Right ventricle myocardium superior (tissue), 1 donor: ENCODE measurements at regions of chr6 and their contacts with region 1.

Region 1: GRCh38 chr6:45916692-45917091 is 99.0 kb downstream of the CLIC5 start:
- DNase-seq: no peak
- ATAC-seq: peak; percentile 69

Region 2: GRCh38 chr6:44475779-44476434 is 1440.8 kb before region 1 on chr6:
- intact Hi-C with region 1: loop called (anchors 10 kb)
- DNase-seq: peak; percentile 82
- ATAC-seq: peak; percentile 89

Region 3: DNA sequence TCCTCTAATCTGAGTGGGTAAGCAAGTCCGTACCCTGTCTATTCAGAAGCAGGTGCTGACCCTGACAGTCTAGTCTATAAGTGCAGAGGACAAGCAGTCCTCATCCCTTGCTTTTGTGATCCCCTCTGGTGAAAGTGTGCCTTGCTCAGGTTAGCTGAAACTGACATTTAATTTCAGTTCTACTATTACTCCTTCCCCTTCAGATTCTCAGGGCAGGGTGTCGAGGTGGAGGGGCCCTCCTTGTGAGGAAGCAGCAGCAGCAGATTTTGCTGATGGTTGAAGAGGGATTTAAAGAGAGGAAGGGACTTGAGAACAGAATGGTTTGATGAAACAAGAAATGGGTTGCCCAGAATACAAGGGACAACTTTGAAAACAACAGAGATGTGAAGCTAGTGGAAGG is 210.4 kb before region 1 on chr6:
- intact Hi-C with region 1: no loop called
- DNase-seq: no peak
- ATAC-seq: no peak